Transverse colon (tissue), 4 donors: ENCODE measurements at regions of chr2 and their contacts with region 1.

Region 1: DNA sequence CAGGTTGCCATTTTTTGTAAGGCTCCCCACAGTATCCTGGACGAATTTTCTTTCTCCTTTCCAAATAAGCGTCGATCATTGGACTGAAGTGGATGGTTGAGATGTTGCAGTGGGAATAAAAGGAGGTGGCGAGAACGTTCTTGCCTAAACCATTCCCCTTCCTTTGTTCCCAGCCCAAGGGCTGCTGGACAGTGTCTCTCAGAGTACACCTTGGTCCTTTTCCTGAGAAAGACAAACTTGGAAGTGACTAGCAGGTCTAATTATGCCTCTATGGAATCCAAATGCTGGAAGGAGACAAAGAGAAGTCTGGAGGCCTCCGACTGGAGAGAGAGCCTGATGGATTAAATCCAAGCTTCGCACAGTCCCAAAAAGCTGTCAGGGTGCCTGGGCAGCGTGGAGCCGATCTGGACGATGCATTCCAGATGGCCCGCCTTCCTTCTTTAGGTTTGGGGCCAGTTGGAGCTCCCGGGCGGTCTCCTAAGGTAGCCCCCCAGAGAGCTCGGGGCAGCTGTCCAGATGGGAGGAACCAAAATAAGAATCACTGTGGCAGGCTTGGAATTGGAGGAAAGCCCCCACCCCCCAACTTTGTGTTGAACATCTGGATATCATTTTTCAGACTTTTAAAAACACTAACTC is 186.8 kb downstream of the TMEM247 start:
- DNase-seq: peak; percentile 26
- H3K4me3 ChIP-seq: no peak overlapping the region
- H3K27ac ChIP-seq: peak overlapping the region; percentile 28 to 78 (median 58)
- H3K4me1 ChIP-seq: peaks cover 0 to 9% (median 2%) of the 10 kb centered on the region in 4 donors
- H3K27me3 ChIP-seq: no peaks in the 10 kb centered on the region
- CTCF ChIP-seq: no peak
- EP300 ChIP-seq: peak; percentile 69
- POLR2A ChIP-seq: no peak

Region 2: GRCh38 chr2:46776687-46777327 is 110.6 kb after region 1 on chr2:
- in situ Hi-C with region 1: loop called in 2 of 4 experiments (anchors 10 to 25 kb)
- intact Hi-C with region 1: no loop called
- DNase-seq: peak; percentile 55
- H3K4me3 ChIP-seq: no peak overlapping the region
- H3K27ac ChIP-seq: no peak overlapping the region
- H3K4me1 ChIP-seq: peaks cover 7 to 14% (median 9%) of the 10 kb centered on the region in 4 donors
- H3K27me3 ChIP-seq: no peaks in the 10 kb centered on the region
- CTCF ChIP-seq: peak; percentile 36 to 66 (median 62)
- EP300 ChIP-seq: no peak
- POLR2A ChIP-seq: no peak